CD4-positive, alpha-beta T cell (primary cell): ENCODE measurements at regions of chr7 and their contacts with region 1.

Region 1: DNA sequence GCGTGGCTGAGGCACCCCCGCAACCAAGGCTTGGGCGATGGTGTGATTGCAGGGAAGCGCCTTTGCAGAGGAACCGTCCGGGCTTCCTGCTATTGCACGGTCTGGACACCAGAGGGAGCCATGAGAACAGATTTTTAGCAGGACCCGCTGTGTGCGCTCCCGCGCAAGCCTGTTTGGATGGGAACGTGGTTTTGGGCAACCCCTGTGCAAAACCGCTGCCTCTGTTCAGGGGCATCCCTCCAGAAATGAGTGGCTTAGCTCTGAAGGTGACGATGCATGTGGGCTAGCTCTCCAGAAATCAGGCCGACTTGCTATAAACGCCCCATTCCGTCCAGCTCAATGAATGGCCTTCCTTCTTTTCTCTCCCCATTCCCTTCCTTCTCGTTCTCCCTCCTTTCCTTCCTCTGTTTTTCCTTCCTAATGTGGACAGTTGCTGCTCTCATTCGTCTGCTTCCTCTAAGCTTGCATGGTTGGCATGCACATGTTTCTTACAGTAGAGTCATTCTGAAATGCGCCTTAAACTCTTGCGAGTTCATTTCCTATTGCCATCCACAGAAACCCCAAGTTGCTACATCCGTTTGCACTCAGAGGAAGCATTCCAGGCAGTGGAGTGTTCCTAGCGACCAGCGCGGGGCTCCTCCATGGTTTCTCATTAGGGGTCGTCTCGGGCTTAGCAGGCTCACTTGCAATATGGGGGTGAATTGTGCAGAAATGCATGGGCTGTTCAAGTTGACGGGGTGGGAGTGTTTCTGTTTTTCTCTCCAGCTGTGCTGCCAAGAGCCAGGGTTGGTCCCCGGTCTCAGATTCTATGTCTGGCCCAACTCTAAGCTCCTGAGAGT is 302.5 kb upstream of the GALNT17 start:
- DNase-seq: peak; percentile 11 to 77 (median 42)
- ATAC-seq: peak; percentile 55
- H3K4me3 ChIP-seq: peak overlapping the region; percentile 30
- H3K4me3 Mint-ChIP-seq: peak overlapping the region; percentile 67
- H3K27ac ChIP-seq: no peak overlapping the region
- H3K27ac Mint-ChIP-seq: no peak overlapping the region
- H3K4me1 ChIP-seq: peaks cover 11% of the 10 kb centered on the region
- H3K4me1 Mint-ChIP-seq: peaks cover 9% of the 10 kb centered on the region
- H3K27me3 ChIP-seq: peaks cover 0 to 2% of the 10 kb centered on the region in 2 experiments
- H3K27me3 Mint-ChIP-seq: peaks cover 12% of the 10 kb centered on the region
- CTCF ChIP-seq: peak; percentile 80

Region 2: DNA sequence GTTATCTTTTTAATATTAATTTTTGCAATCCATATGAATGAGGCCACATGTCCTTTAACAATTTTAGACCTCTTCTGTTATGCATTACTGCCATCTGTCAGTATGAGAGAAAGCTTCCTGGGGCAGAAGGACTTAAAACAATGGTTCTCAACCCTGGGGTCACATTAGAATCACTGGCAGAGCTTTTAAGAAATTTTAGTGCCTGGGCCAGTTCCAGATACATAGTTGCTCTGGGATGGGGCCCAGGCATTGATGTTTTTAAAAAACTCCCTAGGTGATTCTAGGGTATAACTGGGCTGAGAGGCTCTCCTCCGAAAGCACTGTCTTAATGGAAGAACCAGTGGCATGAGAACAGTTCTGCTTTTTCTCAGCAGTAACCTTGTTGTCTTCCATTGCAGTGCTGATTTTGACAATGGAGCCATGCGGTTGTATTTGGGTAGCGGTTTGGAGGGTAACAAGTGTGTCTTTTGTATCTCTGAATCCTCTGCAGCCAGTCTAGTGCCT is 1004.3 kb before region 1 on chr7:
- CTCF ChIA-PET with region 1: no interaction called
- POLR2A ChIA-PET with region 1: no interaction called
- intact Hi-C with region 1: loop called in 1 of 2 experiments (anchors 10 kb)
- DNase-seq: peak in 1 of 14 experiments; percentile 2
- ATAC-seq: no peak
- H3K4me3 ChIP-seq: no peak overlapping the region
- H3K4me3 Mint-ChIP-seq: no peak overlapping the region
- H3K27ac ChIP-seq: peak overlapping the region in 1 of 2 donors; percentile 13
- H3K27ac Mint-ChIP-seq: peak overlapping the region; percentile 34
- H3K4me1 ChIP-seq: no peaks in the 10 kb centered on the region
- H3K4me1 Mint-ChIP-seq: peaks cover 23% of the 10 kb centered on the region
- H3K27me3 ChIP-seq: no peaks in the 10 kb centered on the region
- H3K27me3 Mint-ChIP-seq: no peaks in the 10 kb centered on the region
- CTCF ChIP-seq: no peak

Region 3: DNA sequence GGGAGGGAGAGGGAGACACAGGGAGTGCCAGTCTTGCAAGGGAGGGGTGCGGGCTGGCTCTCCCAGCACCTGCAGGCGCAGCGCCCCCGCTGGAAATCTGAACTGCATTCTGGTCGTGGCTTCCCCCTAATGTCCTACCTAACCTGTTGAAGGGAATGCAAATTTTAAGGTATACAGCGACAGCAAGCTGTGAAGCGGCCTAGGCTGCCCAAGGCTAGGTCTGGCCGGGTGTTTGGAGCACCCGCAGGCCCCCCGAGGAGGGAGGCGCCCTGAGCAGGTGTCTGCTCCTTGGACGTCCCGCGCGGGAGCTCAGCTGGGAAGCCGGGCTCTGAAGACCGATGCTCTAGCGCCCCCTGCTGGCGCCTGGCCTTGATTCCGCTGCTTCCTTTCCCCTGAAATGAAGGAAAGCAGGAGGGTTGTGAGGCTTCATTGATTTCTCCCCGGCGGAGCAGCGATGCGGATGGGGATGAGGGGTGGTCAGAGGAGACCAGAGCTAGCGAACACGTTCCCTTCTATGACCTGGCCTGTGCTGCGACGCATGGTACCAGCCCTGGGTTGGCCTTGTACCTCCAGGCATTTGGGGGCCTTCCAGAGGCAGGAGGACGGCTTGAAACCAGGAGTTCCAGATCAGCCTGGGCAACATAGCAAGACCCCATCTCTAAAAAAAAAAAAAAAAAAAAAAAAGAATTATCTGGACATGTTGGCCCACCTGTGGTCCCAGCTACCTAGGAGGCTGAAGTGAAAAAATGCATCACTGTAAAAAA is 903.8 kb after region 1 on chr7:
- CTCF ChIA-PET with region 1: interaction called, 3 read pairs
- POLR2A ChIA-PET with region 1: no interaction called
- intact Hi-C with region 1: loop called (anchors 2 kb)
- DNase-seq: peak; percentile 17 to 75 (median 38)
- ATAC-seq: no peak
- H3K4me3 ChIP-seq: no peak overlapping the region
- H3K4me3 Mint-ChIP-seq: no peak overlapping the region
- H3K27ac ChIP-seq: no peak overlapping the region
- H3K27ac Mint-ChIP-seq: no peak overlapping the region
- H3K4me1 ChIP-seq: peaks cover 5% of the 10 kb centered on the region
- H3K4me1 Mint-ChIP-seq: no peaks in the 10 kb centered on the region
- H3K27me3 ChIP-seq: no peaks in the 10 kb centered on the region
- H3K27me3 Mint-ChIP-seq: peaks cover 9% of the 10 kb centered on the region
- CTCF ChIP-seq: peak; percentile 77